ENCODE measurements at regions of chr16 and their contacts with region 1.

Region 1: DNA sequence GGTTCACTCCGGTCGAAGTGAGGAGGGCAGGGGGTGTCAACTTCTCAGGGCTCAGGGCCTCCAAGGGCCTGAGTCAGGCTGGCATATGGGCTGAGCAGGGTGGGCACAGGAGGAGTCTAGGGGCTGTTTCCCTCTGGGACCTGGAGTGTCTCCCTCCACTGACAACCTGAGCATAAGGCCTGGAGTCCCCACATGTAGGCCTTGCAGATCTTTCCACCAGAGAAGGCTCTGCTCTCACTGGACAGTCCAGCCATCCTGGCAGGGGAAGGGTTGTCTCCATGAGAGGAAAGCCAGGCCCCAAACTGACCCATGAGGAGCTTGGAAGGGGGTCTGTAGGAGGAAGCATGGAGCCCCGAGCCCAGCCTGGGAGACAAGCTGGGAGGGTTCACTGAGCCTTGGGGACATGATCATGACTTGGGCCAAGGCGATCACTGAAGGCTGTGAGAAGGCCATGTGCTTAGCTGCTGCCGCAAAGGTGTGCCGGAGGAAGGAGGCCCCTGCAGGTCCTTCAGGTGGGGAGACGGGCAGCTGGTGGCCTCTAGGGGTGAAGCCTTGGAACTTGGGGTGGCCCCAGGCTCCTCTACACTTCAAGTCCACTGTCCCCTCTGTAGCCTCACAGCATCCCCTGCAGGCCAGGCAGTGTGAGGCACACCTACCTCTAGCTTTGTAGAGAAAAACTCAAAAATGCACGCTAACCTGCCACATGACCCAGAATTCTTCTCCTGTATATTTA is 9.9 kb downstream of the CMTM2 start:
- DNase-seq: peak; percentile 88
- H3K4me3 Mint-ChIP-seq: peak overlapping the region; percentile 50
- H3K27ac Mint-ChIP-seq: no peak overlapping the region
- H3K4me1 Mint-ChIP-seq: peaks cover 32% of the 10 kb centered on the region
- H3K27me3 Mint-ChIP-seq: no peaks in the 10 kb centered on the region

Region 2: GRCh38 chr16:66357153-66357928 is 231.8 kb before region 1 on chr16:
- CTCF ChIA-PET with region 1: no interaction called
- intact Hi-C with region 1: loop called (anchors 5 kb)
- DNase-seq: peak; percentile 47
- H3K4me3 Mint-ChIP-seq: no peak overlapping the region
- H3K27ac Mint-ChIP-seq: no peak overlapping the region
- H3K4me1 Mint-ChIP-seq: no peaks in the 10 kb centered on the region
- H3K27me3 Mint-ChIP-seq: peaks cover 29% of the 10 kb centered on the region

Region 3: GRCh38 chr16:66483689-66484481 is 105.3 kb before region 1 on chr16:
- CTCF ChIA-PET with region 1: interaction called, 16 read pairs
- intact Hi-C with region 1: loop called (anchors 1 kb)
- DNase-seq: peak; percentile 86
- H3K4me3 Mint-ChIP-seq: no peak overlapping the region
- H3K27ac Mint-ChIP-seq: peak overlapping the region; percentile 33
- H3K4me1 Mint-ChIP-seq: peaks cover 22% of the 10 kb centered on the region
- H3K27me3 Mint-ChIP-seq: no peaks in the 10 kb centered on the region

Region 4: DNA sequence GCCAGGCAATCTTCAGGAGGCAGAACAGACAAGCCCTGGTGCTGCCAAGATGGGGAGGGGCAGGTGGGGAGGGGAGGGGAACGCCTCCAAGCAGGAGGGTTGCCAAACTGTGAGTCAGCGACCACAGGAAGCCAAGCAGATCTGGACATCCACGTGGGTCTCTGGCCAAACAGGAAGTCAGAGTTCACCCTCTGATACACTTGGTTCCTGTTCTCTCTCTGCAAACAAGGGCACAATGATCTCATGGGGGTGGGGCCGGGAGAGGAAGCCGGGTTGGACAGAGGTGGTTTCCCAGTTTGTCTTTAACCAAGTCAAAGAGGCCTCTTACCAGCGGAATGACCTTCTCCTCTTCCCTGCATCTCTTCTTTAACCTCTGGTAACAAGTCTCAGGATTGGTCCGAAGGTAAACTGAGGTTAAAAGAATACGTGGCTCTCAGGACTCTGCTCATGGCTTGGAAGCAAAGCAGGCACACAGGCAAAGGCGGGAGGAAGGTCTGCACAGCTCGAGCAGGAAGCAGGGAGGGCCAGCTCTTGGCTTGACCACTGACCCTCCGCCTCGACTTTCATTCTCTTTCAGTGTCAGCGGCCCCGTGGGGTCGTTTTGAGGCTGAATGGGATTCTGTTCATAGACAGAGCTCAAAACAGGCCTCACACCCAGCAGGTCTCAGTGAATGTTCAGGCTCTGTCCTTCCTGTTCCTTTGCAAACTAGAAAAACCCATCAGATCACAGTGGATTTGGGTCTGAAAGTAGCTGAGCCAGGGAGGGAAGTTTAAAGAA is 72.2 kb before region 1 on chr16:
- CTCF ChIA-PET with region 1: interaction called, 7 read pairs
- intact Hi-C with region 1: loop called (anchors 1 kb)
- DNase-seq: peak; percentile 96
- H3K4me3 Mint-ChIP-seq: peak overlapping the region; percentile 68
- H3K27ac Mint-ChIP-seq: peak overlapping the region; percentile 93
- H3K4me1 Mint-ChIP-seq: peaks cover 60% of the 10 kb centered on the region
- H3K27me3 Mint-ChIP-seq: no peaks in the 10 kb centered on the region

Region 5: GRCh38 chr16:66562407-66562806 is 26.7 kb before region 1 on chr16:
- CTCF ChIA-PET with region 1: interaction called, 6 read pairs
- intact Hi-C with region 1: loop called (anchors 1 kb)
- DNase-seq: no peak
- H3K4me3 Mint-ChIP-seq: no peak overlapping the region
- H3K27ac Mint-ChIP-seq: no peak overlapping the region
- H3K4me1 Mint-ChIP-seq: peaks cover 55% of the 10 kb centered on the region
- H3K27me3 Mint-ChIP-seq: no peaks in the 10 kb centered on the region

Region 6: GRCh38 chr16:67183627-67184328 is 594.6 kb after region 1 on chr16 and contains the start of gene MATCAP1:
- CTCF ChIA-PET with region 1: no interaction called
- intact Hi-C with region 1: no loop called
- DNase-seq: peak; percentile 97
- H3K4me3 Mint-ChIP-seq: peak within 1 kb of the TSS; percentile 50
- H3K27ac Mint-ChIP-seq: no peak within 1 kb of the TSS
- H3K4me1 Mint-ChIP-seq: peaks cover 12% of the 10 kb centered on the region
- H3K27me3 Mint-ChIP-seq: peaks cover 17% of the 10 kb centered on the region
- total RNA-seq, gene MATCAP1: 21.9 to 24.0 TPM

Measured in activated naive CD4-positive, alpha-beta T cell treated with anti-CD3 and anti-CD28 coated beads for 36 hours (primary cell).